Cardiac septum (tissue), 1 donor: ENCODE measurements at regions of chr5 and their contacts with region 1.

Region 1: DNA sequence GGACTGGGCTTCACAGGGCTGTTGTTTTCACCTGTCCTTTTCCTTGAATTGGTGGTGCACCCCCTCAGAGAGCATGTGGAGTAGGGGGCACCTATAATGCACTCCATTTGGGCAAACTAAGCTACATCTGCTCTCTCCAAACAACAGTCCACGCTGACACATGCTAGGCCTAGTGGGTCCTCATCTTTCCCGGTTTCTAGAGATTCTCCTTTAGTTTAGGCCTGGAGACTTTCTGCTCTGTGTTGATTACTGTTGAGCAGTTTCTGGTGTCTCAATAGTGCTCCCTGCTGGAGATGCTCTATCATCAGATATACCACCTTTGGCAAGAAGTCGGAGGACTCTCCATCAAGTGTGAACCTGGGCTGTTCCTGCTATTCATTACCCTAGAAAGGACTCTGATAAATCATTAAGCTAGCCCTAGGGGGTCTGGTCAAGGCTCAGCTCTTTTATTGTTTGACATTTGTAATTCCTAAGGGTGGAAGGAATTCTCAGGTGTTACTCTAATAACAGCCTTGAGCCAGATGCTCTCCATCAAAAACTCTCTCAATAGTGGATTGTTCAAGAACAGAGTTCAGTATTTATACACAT is 64.0 kb upstream of the FYB1 start:
- DNase-seq: no peak

Region 2: GRCh38 chr5:38994324-38994927 is 288.9 kb before region 1 on chr5:
- intact Hi-C with region 1: loop called (anchors 10 kb)
- DNase-seq: no peak

Region 3: GRCh38 chr5:39217365-39218281 is 65.7 kb before region 1 on chr5:
- intact Hi-C with region 1: loop called (anchors 5 kb)
- DNase-seq: no peak

Region 4: DNA sequence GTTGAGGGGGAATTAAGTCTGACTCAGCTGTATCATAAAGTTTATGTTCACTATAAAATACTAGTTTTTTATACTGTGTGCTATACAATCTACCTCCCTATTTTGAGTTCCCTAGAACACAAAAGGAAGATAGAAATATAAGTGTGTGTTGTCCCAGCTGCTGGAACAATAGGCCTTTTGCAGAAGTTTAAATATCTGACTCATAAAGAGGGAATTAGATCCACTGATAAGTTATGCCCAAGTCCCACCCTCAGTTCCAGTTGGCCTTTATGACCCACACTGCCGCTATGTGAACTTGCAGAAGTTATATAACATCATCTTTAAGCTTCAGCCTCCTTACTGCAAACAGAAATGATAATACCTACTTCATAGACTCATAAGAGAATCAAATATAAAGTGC is 229.9 kb after region 1 on chr5:
- intact Hi-C with region 1: no loop called
- DNase-seq: no peak